ENCODE measurements at regions of chr4 and their contacts with region 1.

Region 1: DNA sequence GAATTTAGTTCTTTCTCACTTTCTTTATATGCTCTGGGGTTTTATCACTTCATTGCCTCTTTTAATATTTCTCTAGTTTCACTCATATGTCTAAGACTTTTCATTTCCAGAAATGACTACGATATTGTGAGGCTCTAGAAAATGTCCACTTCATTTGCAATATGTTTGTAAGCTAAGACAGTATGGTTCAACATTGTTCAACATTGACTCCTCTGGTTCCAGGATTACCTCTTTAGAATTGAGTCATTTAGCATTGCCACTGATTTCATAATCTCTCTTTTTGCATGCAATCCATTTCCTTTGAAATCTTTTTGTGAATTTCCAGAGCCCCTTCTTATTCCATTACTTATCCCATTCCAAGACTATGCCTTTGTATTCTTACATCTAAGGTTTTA is 32.3 kb downstream of the BBS12 start:
- DNase-seq: no peak
- H3K4me3 Mint-ChIP-seq: no peak overlapping the region
- H3K27ac Mint-ChIP-seq: peak overlapping the region; percentile 50
- H3K4me1 Mint-ChIP-seq: peaks cover 30% of the 10 kb centered on the region
- H3K27me3 Mint-ChIP-seq: no peaks in the 10 kb centered on the region

Region 2: GRCh38 chr4:122814426-122814825 is 49.6 kb after region 1 on chr4:
- CTCF ChIA-PET with region 1: no interaction called
- intact Hi-C with region 1: loop called (anchors 1 kb)
- DNase-seq: peak; percentile 24
- H3K4me3 Mint-ChIP-seq: no peak overlapping the region
- H3K27ac Mint-ChIP-seq: no peak overlapping the region
- H3K4me1 Mint-ChIP-seq: peaks cover 8% of the 10 kb centered on the region
- H3K27me3 Mint-ChIP-seq: peaks cover 12% of the 10 kb centered on the region

Region 3: GRCh38 chr4:122827879-122828601 is 63.2 kb after region 1 on chr4:
- CTCF ChIA-PET with region 1: no interaction called
- intact Hi-C with region 1: loop called (anchors 1 kb)
- DNase-seq: peak; percentile 71
- H3K4me3 Mint-ChIP-seq: peak overlapping the region; percentile 78
- H3K27ac Mint-ChIP-seq: peak overlapping the region; percentile 9
- H3K4me1 Mint-ChIP-seq: peaks cover 12% of the 10 kb centered on the region
- H3K27me3 Mint-ChIP-seq: peaks cover 74% of the 10 kb centered on the region

Region 4: DNA sequence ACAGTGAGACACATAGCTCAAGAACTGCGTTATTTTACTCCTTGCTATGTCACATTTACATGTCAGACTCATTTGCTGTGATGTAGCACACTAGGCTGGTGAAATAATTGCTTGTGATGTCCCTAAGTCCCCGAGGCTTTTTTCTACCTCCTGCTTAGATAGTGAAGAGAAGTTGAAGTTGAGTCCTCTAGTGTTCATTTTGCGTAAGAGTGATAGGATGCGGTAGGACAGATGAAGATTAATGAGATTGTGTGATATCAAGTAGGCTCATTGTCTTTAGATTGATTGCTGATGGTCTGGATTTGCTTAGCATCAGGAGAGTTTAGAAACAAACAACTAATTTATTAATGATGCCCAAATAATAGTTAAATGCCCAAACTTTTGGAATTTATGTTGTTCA is 331.2 kb after region 1 on chr4:
- CTCF ChIA-PET with region 1: no interaction called
- intact Hi-C with region 1: loop called (anchors 2 kb)
- DNase-seq: no peak
- H3K4me3 Mint-ChIP-seq: no peak overlapping the region
- H3K27ac Mint-ChIP-seq: no peak overlapping the region
- H3K4me1 Mint-ChIP-seq: no peaks in the 10 kb centered on the region
- H3K27me3 Mint-ChIP-seq: no peaks in the 10 kb centered on the region